ENCODE measurements at regions of chr5 and their contacts with region 1.

Region 1: GRCh38 chr5:15003511-15003920 is 131.9 kb upstream of the ANKH start:
- DNase-seq: peak; percentile 70
- ATAC-seq: peak; percentile 91
- H3K4me3 Mint-ChIP-seq: no peak overlapping the region
- H3K27ac Mint-ChIP-seq: no peak overlapping the region
- H3K4me1 Mint-ChIP-seq: peaks cover 6% of the 10 kb centered on the region
- H3K27me3 Mint-ChIP-seq: no peaks in the 10 kb centered on the region

Region 2: DNA sequence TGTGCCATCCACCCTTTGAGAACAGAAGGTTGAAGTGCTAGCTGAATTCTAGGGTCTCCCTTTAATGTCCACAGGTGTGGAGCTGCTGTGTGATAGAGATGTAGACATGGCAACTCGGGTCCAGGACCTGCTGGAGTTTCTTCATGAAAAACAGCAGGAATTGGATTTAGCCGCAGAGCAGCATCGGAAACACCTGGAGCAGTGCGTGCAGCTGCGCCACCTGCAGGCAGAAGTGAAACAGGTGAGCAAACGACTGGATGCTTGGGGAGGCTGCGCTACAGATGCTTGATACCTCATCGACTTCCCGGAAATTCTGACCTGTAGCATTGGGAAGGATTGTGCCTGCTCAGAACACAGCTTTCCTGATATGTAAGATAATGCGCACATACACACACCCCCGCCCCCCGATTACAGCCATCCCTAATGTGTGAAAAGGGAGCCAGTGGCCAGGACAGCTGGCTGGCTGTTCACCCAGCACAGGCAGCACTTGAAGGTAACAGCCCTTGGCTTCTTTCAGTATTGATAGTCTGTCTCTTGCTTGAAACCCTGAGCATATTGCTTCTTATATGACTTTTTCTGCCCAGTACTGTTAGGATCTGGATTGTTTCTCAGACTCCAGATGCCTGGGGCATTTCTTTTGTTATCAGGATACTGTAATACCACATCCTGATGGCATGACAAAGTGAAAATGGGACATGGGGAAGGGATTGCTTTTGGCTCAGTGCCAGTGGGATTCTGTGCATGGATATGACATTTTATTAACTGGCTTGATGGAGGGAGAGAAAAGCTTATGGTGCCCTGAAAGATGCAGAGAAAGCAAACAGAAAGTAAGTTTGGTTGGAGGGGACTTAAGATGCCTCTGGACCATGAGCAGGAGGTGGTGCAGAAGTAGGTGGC is 638.7 kb before region 1 on chr5:
- CTCF ChIA-PET with region 1: no interaction called
- POLR2A ChIA-PET with region 1: no interaction called
- intact Hi-C with region 1: loop called (anchors 5 to 10 kb)
- DNase-seq: peak; percentile 42
- ATAC-seq: peak; percentile 33
- H3K4me3 Mint-ChIP-seq: no peak overlapping the region
- H3K27ac Mint-ChIP-seq: no peak overlapping the region
- H3K4me1 Mint-ChIP-seq: peaks cover 23% of the 10 kb centered on the region
- H3K27me3 Mint-ChIP-seq: no peaks in the 10 kb centered on the region

Region 3: GRCh38 chr5:14685757-14686156 is 317.8 kb before region 1 on chr5:
- CTCF ChIA-PET with region 1: interaction called, 18 read pairs
- POLR2A ChIA-PET with region 1: interaction called, 3 read pairs
- intact Hi-C with region 1: loop called (anchors 1 kb)
- DNase-seq: peak; percentile 64
- ATAC-seq: peak; percentile 87
- H3K4me3 Mint-ChIP-seq: no peak overlapping the region
- H3K27ac Mint-ChIP-seq: no peak overlapping the region
- H3K4me1 Mint-ChIP-seq: peaks cover 10% of the 10 kb centered on the region
- H3K27me3 Mint-ChIP-seq: no peaks in the 10 kb centered on the region

Region 4: GRCh38 chr5:14890846-14891245 is 112.7 kb before region 1 on chr5:
- CTCF ChIA-PET with region 1: no interaction called
- POLR2A ChIA-PET with region 1: no interaction called
- intact Hi-C with region 1: no loop called
- DNase-seq: no peak
- ATAC-seq: no peak
- H3K4me3 Mint-ChIP-seq: no peak overlapping the region
- H3K27ac Mint-ChIP-seq: no peak overlapping the region
- H3K4me1 Mint-ChIP-seq: no peaks in the 10 kb centered on the region
- H3K27me3 Mint-ChIP-seq: no peaks in the 10 kb centered on the region

Region 5: GRCh38 chr5:14946815-14947640 is 56.5 kb before region 1 on chr5:
- CTCF ChIA-PET with region 1: interaction called, 17 read pairs
- POLR2A ChIA-PET with region 1: no interaction called
- intact Hi-C with region 1: loop called (anchors 1 to 2 kb)
- DNase-seq: peak; percentile 40
- ATAC-seq: peak; percentile 95
- H3K4me3 Mint-ChIP-seq: no peak overlapping the region
- H3K27ac Mint-ChIP-seq: no peak overlapping the region
- H3K4me1 Mint-ChIP-seq: peaks cover 19% of the 10 kb centered on the region
- H3K27me3 Mint-ChIP-seq: no peaks in the 10 kb centered on the region

Region 6: GRCh38 chr5:14976486-14976885 is 27.0 kb before region 1 on chr5:
- CTCF ChIA-PET with region 1: interaction called, 17 read pairs
- POLR2A ChIA-PET with region 1: no interaction called
- intact Hi-C with region 1: no loop called
- DNase-seq: no peak
- ATAC-seq: no peak
- H3K4me3 Mint-ChIP-seq: no peak overlapping the region
- H3K27ac Mint-ChIP-seq: no peak overlapping the region
- H3K4me1 Mint-ChIP-seq: peaks cover 3% of the 10 kb centered on the region
- H3K27me3 Mint-ChIP-seq: peaks cover 2% of the 10 kb centered on the region

Region 7: GRCh38 chr5:15031151-15031550 is 27.6 kb after region 1 on chr5:
- CTCF ChIA-PET with region 1: no interaction called
- POLR2A ChIA-PET with region 1: no interaction called
- intact Hi-C with region 1: no loop called
- DNase-seq: no peak
- ATAC-seq: no peak
- H3K4me3 Mint-ChIP-seq: no peak overlapping the region
- H3K27ac Mint-ChIP-seq: no peak overlapping the region
- H3K4me1 Mint-ChIP-seq: no peaks in the 10 kb centered on the region
- H3K27me3 Mint-ChIP-seq: peaks cover 17% of the 10 kb centered on the region

Region 8: GRCh38 chr5:16819522-16820167 is 1816.1 kb after region 1 on chr5:
- CTCF ChIA-PET with region 1: no interaction called
- POLR2A ChIA-PET with region 1: no interaction called
- intact Hi-C with region 1: no loop called
- DNase-seq: no peak
- ATAC-seq: no peak
- H3K4me3 Mint-ChIP-seq: no peak overlapping the region
- H3K27ac Mint-ChIP-seq: no peak overlapping the region
- H3K4me1 Mint-ChIP-seq: no peaks in the 10 kb centered on the region
- H3K27me3 Mint-ChIP-seq: no peaks in the 10 kb centered on the region